Naive thymus-derived CD4-positive, alpha-beta T cell (primary cell): ENCODE measurements at regions of chr14 and their contacts with region 1.

Region 1: GRCh38 chr14:75982266-75983018 is 647 bp upstream of the TGFB3 start:
- DNase-seq: peak; percentile 69 to 83 (median 80)
- ATAC-seq: peak; percentile 83
- H3K4me3 ChIP-seq: peak overlapping the region; percentile 83
- H3K4me3 Mint-ChIP-seq: peak overlapping the region; percentile 80 to 99 (median 88)
- H3K27ac ChIP-seq: peak overlapping the region; percentile 84
- H3K27ac Mint-ChIP-seq: peak overlapping the region; percentile 58 to 97 (median 90)
- H3K4me1 ChIP-seq: peaks cover 18 to 32% of the 10 kb centered on the region in 2 donors
- H3K4me1 Mint-ChIP-seq: peaks cover 43 to 64% (median 56%) of the 10 kb centered on the region in 7 donors
- H3K27me3 ChIP-seq: no peaks in the 10 kb centered on the region
- H3K27me3 Mint-ChIP-seq: peaks cover 0 to 24% (median 0%) of the 10 kb centered on the region in 5 donors

Region 2: GRCh38 chr14:75126679-75127473 is 855.6 kb before region 1 on chr14 and contains the start of gene NEK9:
- CTCF ChIA-PET with region 1: no interaction called
- POLR2A ChIA-PET with region 1: no interaction called
- intact Hi-C with region 1: loop called in 1 of 2 experiments (anchors 5 kb)
- DNase-seq: peak; percentile 78 to 91 (median 87)
- ATAC-seq: peak; percentile 92
- H3K4me3 ChIP-seq: peak within 1 kb of the TSS; percentile 87
- H3K4me3 Mint-ChIP-seq: peak within 1 kb of the TSS; percentile 87 to 99 (median 96)
- H3K27ac ChIP-seq: peak within 1 kb of the TSS; percentile 89
- H3K27ac Mint-ChIP-seq: peak within 1 kb of the TSS; percentile 95 to 98 (median 98)
- H3K4me1 ChIP-seq: peaks cover 22 to 29% of the 10 kb centered on the region in 2 donors
- H3K4me1 Mint-ChIP-seq: peaks cover 36 to 48% (median 44%) of the 10 kb centered on the region in 7 donors
- H3K27me3 ChIP-seq: no peaks in the 10 kb centered on the region
- H3K27me3 Mint-ChIP-seq: no peaks in the 10 kb centered on the region
- total RNA-seq, gene NEK9: 81.7 to 141 (median 84.7) TPM

Region 3: DNA sequence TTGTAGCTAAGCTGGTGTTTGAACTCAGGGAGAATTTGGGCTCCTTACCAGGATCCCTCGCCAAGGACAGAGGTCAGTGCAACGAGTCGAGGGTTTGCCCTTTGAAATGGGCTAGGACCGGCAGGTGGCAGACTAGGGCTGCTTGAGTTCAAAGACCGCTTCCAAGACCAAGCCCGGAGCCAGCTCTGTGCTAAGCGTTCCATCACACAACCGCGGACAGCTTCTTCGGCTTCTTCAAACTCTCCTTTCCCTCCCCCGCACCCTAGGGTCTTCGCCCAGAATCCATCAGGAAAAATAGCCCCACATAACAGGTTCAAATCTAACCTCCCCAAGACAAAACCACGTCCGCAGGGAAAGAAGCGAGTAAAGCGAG is 404.7 kb before region 1 on chr14:
- CTCF ChIA-PET with region 1: interaction called, 13 read pairs
- POLR2A ChIA-PET with region 1: interaction called, 4 read pairs
- intact Hi-C with region 1: loop called (anchors 1 kb)
- DNase-seq: peak; percentile 45 to 71 (median 54)
- ATAC-seq: peak; percentile 92
- H3K4me3 ChIP-seq: peak overlapping the region; percentile 64
- H3K4me3 Mint-ChIP-seq: peak overlapping the region in 5 of 10 donors; percentile 90 to 96 (median 93)
- H3K27ac ChIP-seq: peak overlapping the region; percentile 41
- H3K27ac Mint-ChIP-seq: peak overlapping the region; percentile 34 to 86 (median 75)
- H3K4me1 ChIP-seq: peaks cover 9 to 12% of the 10 kb centered on the region in 2 donors
- H3K4me1 Mint-ChIP-seq: peaks cover 6 to 19% (median 9%) of the 10 kb centered on the region in 7 donors
- H3K27me3 ChIP-seq: no peaks in the 10 kb centered on the region
- H3K27me3 Mint-ChIP-seq: peaks cover 0 to 8% (median 0%) of the 10 kb centered on the region in 5 donors

Region 4: GRCh38 chr14:75906676-75907280 is 75.7 kb before region 1 on chr14:
- CTCF ChIA-PET with region 1: interaction called, 73 read pairs
- POLR2A ChIA-PET with region 1: interaction called, 7 read pairs
- intact Hi-C with region 1: loop called (anchors 1 kb)
- DNase-seq: peak; percentile 21 to 62 (median 54)
- ATAC-seq: peak; percentile 74
- H3K4me3 ChIP-seq: no peak overlapping the region
- H3K4me3 Mint-ChIP-seq: no peak overlapping the region
- H3K27ac ChIP-seq: no peak overlapping the region
- H3K27ac Mint-ChIP-seq: no peak overlapping the region
- H3K4me1 ChIP-seq: no peaks in the 10 kb centered on the region
- H3K4me1 Mint-ChIP-seq: peaks cover 0 to 2% (median 0%) of the 10 kb centered on the region in 7 donors
- H3K27me3 ChIP-seq: no peaks in the 10 kb centered on the region
- H3K27me3 Mint-ChIP-seq: no peaks in the 10 kb centered on the region

Region 5: DNA sequence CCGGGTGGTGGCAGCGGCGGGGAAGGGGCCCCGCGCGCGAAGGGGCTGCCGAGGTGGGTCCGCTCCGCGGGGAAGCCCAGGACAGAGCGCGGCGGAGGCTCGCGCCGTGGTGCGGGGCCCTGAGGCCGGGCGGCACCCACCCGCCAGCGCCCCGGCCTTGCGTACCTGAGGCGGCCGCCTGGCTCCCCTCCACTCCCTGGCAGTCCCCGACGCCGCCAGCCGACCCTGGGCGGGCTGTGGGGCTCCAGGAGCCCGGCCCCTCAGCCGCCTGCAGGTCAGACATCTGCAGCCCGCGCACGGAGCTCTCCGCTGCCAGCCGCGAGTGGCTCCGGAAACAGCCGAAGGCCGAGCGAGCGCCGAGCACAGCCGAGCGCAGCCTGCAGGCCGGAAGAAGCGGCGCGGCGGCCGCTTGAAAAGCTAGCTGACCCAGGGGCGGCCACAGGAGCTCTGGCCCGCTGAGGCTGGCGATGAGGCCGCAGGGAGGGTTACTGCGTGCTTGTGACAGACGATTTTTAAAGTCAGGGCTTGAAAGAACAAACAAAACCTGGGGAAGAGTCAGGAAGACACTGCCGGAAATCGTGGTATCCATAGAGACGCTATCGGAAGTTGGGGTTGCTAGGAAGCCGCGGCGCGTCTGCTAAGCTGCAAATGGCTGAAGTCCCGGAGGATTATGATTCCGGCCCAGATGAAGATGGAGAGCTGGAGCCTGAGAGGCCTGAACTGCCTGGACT is 1394.5 kb after region 1 on chr14 and contains the starts of genes SAMD15 and TMED8:
- CTCF ChIA-PET with region 1: no interaction called
- POLR2A ChIA-PET with region 1: no interaction called
- intact Hi-C with region 1: loop called in 1 of 2 experiments (anchors 5 kb)
- DNase-seq: peak; percentile 77 to 88 (median 83)
- ATAC-seq: peak; percentile 96
- H3K4me3 ChIP-seq: peak within 1 kb of the TSS; percentile 99
- H3K4me3 Mint-ChIP-seq: peak within 1 kb of the TSS in 7 of 10 donors; percentile 88 to 97 (median 93)
- H3K27ac ChIP-seq: peak within 1 kb of the TSS; percentile 87
- H3K27ac Mint-ChIP-seq: peak within 1 kb of the TSS; percentile 52 to 93 (median 77)
- H3K4me1 ChIP-seq: peaks cover 14 to 18% of the 10 kb centered on the region in 2 donors
- H3K4me1 Mint-ChIP-seq: peaks cover 17 to 41% (median 39%) of the 10 kb centered on the region in 7 donors
- H3K27me3 ChIP-seq: no peaks in the 10 kb centered on the region
- H3K27me3 Mint-ChIP-seq: peaks cover 0 to 10% (median 0%) of the 10 kb centered on the region in 5 donors
- total RNA-seq, gene SAMD15: 0.27 to 0.46 (median 0.42) TPM in 3 of 5 experiments, not detected in the others
- total RNA-seq, gene TMED8: 5.5 to 18.6 (median 7.0) TPM